G401 (cell line): ENCODE measurements at regions of chr20 and their contacts with region 1.

Region 1: GRCh38 chr20:62529896-62530642 is 54.3 kb upstream of the GATA5 start:
- DNase-seq: no peak

Region 2: DNA sequence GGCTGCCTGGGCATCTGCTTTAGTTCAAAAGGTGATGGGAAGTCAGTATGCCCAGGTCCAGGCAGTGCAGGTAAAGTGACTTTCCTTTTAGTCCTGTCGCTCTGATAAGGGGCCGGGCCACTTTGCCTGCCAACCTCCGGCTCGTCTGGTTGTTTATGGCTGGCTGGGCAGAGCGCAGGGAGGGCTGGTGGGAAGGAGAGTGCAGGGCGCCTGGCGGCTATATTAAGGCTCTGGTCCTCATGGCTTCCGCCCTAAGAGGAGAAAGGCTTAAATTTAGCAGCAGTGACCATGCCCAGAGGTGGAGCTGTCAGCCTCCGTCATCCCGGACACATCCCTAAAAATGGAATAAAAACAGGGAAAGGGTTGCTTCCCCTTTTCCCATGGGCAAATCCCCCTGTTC is 68.9 kb before region 1 on chr20:
- in situ Hi-C with region 1: no loop called
- DNase-seq: no peak

Region 3: GRCh38 chr20:62576815-62577506 is 46.9 kb after region 1 on chr20:
- in situ Hi-C with region 1: loop called (anchors 5 kb)
- DNase-seq: no peak